GM12878 (cell line): ENCODE measurements at regions of chr6 and their contacts with region 1.

Region 1: GRCh38 chr6:137094411-137095008 is 49.7 kb upstream of the IL20RA start:
- DNase-seq: peak; percentile 91
- ATAC-seq: peak; percentile 58
- H3K4me3 ChIP-seq: 0 out of 2 replicates have a peak overlapping the region, but pooled peaks have one; percentile 0
- H3K27ac ChIP-seq: peak overlapping the region; percentile 95
- H3K4me1 ChIP-seq: peaks cover 55% of the 10 kb centered on the region
- H3K27me3 ChIP-seq: no peaks in the 10 kb centered on the region
- CTCF ChIP-seq: peak; percentile 70 to 87 (median 76)
- EP300 ChIP-seq: peak in 1 of 2 experiments; percentile 32; a peak in 1 of 4 replicates
- POLR2A ChIP-seq: no peak
- RAD21 ChIP-seq: peak; percentile 93

Region 2: DNA sequence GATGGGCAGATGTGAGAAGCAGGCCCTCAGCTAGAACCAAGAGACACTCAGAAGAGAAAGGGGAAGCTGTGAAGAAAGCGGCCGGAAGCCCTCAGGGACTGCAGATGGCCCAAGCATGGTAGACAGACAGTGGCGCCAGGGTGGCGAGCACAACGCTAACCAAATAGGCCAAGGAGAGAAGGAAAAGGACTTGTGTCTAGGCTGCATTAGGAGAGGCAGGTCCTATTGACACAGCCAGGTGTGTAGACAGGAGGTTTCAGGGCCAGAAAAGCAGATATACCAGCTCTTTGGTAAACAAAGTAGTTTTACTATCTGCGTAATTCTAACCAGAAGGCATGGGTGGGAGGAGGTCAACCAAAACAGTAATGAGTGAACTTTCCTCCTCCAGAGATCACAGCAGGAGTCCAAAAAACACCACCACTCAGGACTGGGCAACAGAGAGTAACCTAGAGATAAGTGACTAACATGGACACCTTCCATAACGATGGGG is 528.5 kb before region 1 on chr6:
- CTCF ChIA-PET with region 1: no interaction called
- POLR2A ChIA-PET with region 1: no interaction called
- RAD21 ChIA-PET with region 1: no interaction called
- SMC1A ChIA-PET with region 1: no interaction called
- in situ Hi-C with region 1: no loop called
- intact Hi-C with region 1: no loop called
- DNase-seq: no peak
- ATAC-seq: no peak
- H3K4me3 ChIP-seq: no peak overlapping the region
- H3K27ac ChIP-seq: no peak overlapping the region
- H3K4me1 ChIP-seq: no peaks in the 10 kb centered on the region
- H3K27me3 ChIP-seq: no peaks in the 10 kb centered on the region
- CTCF ChIP-seq: no peak
- EP300 ChIP-seq: no peak
- POLR2A ChIP-seq: no peak
- RAD21 ChIP-seq: no peak

Region 3: DNA sequence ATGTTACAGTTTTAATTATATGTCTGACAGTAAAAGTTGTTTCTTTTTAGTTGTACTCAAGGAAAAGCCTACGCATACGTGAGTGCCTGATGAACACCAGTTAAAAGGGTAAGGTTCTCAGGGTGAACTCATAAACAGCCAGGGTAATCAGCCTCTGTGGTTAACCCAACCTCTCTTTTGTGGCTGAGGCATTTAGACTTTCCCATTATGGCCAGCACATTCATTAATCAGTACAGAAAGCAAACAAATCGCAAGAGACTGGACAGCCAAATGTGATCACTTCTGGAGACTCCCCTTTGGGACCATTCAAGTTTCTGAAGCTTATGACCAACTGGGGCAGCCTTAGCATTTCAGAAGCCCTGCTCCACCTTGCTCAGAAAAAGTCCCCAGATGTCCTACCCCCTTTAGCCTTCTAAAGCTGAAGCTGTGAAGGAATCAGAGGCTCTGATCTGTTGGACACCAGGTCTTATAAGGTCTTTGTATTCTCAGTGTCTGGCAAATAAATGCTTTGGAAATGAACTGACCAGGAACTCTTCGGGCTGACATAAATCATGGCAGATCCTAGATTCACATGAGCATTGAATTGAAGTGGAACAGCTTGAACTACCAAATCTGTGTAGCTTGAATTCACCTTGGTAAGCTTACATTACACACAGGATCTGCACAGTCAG is 68.6 kb before region 1 on chr6:
- CTCF ChIA-PET with region 1: no interaction called
- POLR2A ChIA-PET with region 1: no interaction called
- RAD21 ChIA-PET with region 1: no interaction called
- SMC1A ChIA-PET with region 1: no interaction called
- in situ Hi-C with region 1: no loop called
- intact Hi-C with region 1: loop called (anchors 2 kb)
- DNase-seq: peak; percentile 56
- ATAC-seq: peak; percentile 92
- H3K4me3 ChIP-seq: no peak overlapping the region
- H3K27ac ChIP-seq: no peak overlapping the region
- H3K4me1 ChIP-seq: no peaks in the 10 kb centered on the region
- H3K27me3 ChIP-seq: no peaks in the 10 kb centered on the region; a peak in 1 of 4 replicates
- CTCF ChIP-seq: no peak
- EP300 ChIP-seq: peak; percentile 61 to 64; a peak in 2 of 4 replicates
- POLR2A ChIP-seq: no peak
- RAD21 ChIP-seq: no peak

Region 4: GRCh38 chr6:137171824-137172705 is 77.6 kb after region 1 on chr6:
- CTCF ChIA-PET with region 1: interaction called, 160 read pairs
- POLR2A ChIA-PET with region 1: interaction called, 62 read pairs
- RAD21 ChIA-PET with region 1: interaction called, 500 read pairs
- SMC1A ChIA-PET with region 1: interaction called, 293 read pairs
- in situ Hi-C with region 1: no loop called
- intact Hi-C with region 1: no loop called
- DNase-seq: peak; percentile 68
- ATAC-seq: peak; percentile 86
- H3K4me3 ChIP-seq: 0 out of 2 replicates have a peak overlapping the region, but pooled peaks have one; percentile 1
- H3K27ac ChIP-seq: peak overlapping the region; percentile 84
- H3K4me1 ChIP-seq: peaks cover 51% of the 10 kb centered on the region
- H3K27me3 ChIP-seq: no peaks in the 10 kb centered on the region
- CTCF ChIP-seq: no peak
- EP300 ChIP-seq: peak; percentile 51 to 64; a peak in 1 of 4 replicates
- POLR2A ChIP-seq: 0 out of 2 replicates have a peak, but pooled peaks have one; percentile 31
- RAD21 ChIP-seq: peak; percentile 18; the same call in 1 of the 2 replicates

Region 5: DNA sequence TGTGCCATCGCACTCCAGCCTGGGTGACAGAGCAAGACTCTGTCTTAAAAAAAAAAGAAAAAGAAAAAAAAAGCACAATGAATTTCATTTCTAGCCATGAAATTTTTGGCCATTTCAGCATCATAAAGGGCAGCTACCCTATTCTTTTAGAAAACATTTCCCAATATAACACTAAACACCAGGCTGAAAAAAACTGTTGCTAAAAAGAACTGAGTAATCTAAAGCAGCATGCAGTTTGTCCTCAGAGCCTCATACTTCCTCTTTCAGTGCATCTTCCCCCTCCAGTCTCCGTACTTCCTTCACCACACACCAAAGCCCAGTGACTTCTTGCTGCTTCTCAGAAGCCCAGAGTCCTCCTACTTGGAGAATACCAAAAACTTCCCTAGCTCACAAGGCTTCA is 130.3 kb after region 1 on chr6:
- CTCF ChIA-PET with region 1: interaction called, 19 read pairs
- POLR2A ChIA-PET with region 1: interaction called, 5 read pairs
- RAD21 ChIA-PET with region 1: interaction called, 7 read pairs
- SMC1A ChIA-PET with region 1: interaction called, 18 read pairs
- in situ Hi-C with region 1: no loop called
- intact Hi-C with region 1: loop called (anchors 2 kb)
- DNase-seq: peak; percentile 70
- ATAC-seq: peak; percentile 76
- H3K4me3 ChIP-seq: no peak overlapping the region
- H3K27ac ChIP-seq: peak overlapping the region; percentile 84
- H3K4me1 ChIP-seq: peaks cover 67% of the 10 kb centered on the region
- H3K27me3 ChIP-seq: no peaks in the 10 kb centered on the region
- CTCF ChIP-seq: no peak
- EP300 ChIP-seq: 0 out of 4 replicates have a peak, but pooled peaks of 1 of the 2 experiments have one; percentile 48
- POLR2A ChIP-seq: no peak
- RAD21 ChIP-seq: no peak

Region 6: DNA sequence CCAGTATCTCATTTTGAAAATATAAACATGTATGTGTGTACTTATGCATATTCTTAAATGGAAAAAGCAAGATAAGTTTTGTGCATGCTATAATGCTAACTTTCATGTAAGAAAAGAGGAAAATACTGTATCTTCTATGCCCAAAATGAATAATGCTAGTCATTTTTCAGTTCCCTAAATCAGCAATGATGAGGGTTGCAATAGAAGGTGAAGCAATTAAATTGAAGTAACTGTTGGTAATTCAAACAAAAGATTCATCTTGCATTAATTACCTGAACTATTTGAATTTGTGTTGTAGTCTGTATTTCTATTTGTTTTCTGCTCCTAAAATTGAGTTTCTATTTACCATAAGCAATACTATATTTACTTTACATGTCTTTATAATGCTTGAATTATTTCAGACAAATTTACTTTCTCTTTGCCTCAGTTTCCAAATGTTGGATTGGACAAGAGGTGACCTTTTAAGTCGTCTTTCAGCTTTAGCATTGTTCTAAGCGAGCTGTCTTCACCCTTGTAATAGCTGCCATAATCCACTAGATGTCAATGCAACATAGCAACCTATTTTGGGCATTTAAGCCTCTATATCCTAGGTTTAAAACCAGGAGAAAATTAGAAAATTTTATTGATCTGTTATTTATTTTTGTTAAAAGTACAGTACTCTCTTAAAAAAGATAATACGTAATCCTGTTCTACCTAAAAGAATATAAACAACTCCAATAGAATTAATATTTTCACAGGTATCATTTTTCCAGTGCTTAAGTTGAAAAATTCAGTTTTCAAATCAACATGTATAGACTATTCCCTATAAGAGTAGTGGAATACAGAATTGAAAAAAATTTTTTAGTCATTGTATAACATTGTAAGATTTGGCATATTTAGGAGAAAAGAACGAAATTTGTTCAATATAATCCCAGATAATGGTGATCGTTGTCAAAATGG is 177.0 kb after region 1 on chr6:
- CTCF ChIA-PET with region 1: interaction called, 13 read pairs
- POLR2A ChIA-PET with region 1: interaction called, 4 read pairs
- RAD21 ChIA-PET with region 1: interaction called, 52 read pairs
- SMC1A ChIA-PET with region 1: interaction called, 54 read pairs
- in situ Hi-C with region 1: loop called (anchors 5 kb)
- intact Hi-C with region 1: loop called (anchors 1 kb)
- DNase-seq: no peak
- ATAC-seq: peak; percentile 92
- H3K4me3 ChIP-seq: no peak overlapping the region
- H3K27ac ChIP-seq: no peak overlapping the region
- H3K4me1 ChIP-seq: peaks cover 3% of the 10 kb centered on the region
- H3K27me3 ChIP-seq: no peaks in the 10 kb centered on the region
- CTCF ChIP-seq: peak; percentile 80 to 91 (median 85)
- EP300 ChIP-seq: no peak
- POLR2A ChIP-seq: no peak
- RAD21 ChIP-seq: peak; percentile 100

Region 7: GRCh38 chr6:137415127-137415833 is 320.8 kb after region 1 on chr6:
- CTCF ChIA-PET with region 1: interaction called, 8 read pairs
- POLR2A ChIA-PET with region 1: no interaction called
- RAD21 ChIA-PET with region 1: interaction called, 7 read pairs
- SMC1A ChIA-PET with region 1: interaction called, 12 read pairs
- in situ Hi-C with region 1: no loop called
- intact Hi-C with region 1: no loop called
- DNase-seq: no peak
- ATAC-seq: peak; percentile 99
- H3K4me3 ChIP-seq: peak overlapping the region; percentile 62
- H3K27ac ChIP-seq: no peak overlapping the region
- H3K4me1 ChIP-seq: peaks cover 4% of the 10 kb centered on the region
- H3K27me3 ChIP-seq: peaks cover 0 to 3% of the 10 kb centered on the region in 2 experiments; a peak in 1 of 4 replicates
- CTCF ChIP-seq: peak; percentile 79 to 89 (median 85)
- EP300 ChIP-seq: no peak
- POLR2A ChIP-seq: no peak
- RAD21 ChIP-seq: peak; percentile 84

Region 8: DNA sequence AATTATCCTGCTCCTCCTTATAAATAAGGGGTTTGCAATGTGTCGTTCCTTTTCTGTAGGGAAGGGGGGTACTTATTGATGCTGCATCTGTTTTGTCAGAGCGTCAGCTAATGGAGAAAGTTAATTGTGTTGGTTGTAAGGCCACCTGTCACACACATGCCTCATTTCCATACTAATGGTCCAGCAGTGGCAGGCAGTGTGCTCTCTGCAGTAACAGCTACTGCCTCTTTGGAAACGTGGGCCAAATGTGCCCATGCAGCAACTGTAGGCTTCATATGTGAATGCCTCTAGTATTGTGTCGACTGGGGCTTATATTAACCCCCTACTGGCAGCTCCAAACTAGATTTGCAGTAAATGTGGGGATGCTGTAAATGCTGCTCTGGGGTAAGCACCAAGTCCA is 456.0 kb after region 1 on chr6:
- CTCF ChIA-PET with region 1: no interaction called
- POLR2A ChIA-PET with region 1: no interaction called
- RAD21 ChIA-PET with region 1: no interaction called
- SMC1A ChIA-PET with region 1: no interaction called
- in situ Hi-C with region 1: no loop called
- intact Hi-C with region 1: no loop called
- DNase-seq: no peak
- ATAC-seq: no peak
- H3K4me3 ChIP-seq: no peak overlapping the region
- H3K27ac ChIP-seq: no peak overlapping the region
- H3K4me1 ChIP-seq: no peaks in the 10 kb centered on the region
- H3K27me3 ChIP-seq: 0 out of 4 replicates have a peak, but pooled peaks cover 1 to 5% of the 10 kb centered on the region in 2 experiments
- CTCF ChIP-seq: no peak
- EP300 ChIP-seq: no peak
- POLR2A ChIP-seq: no peak
- RAD21 ChIP-seq: no peak